SK-N-SH (cell line): ENCODE measurements at regions of chr5 and their contacts with region 1.

Region 1: GRCh38 chr5:134289509-134290113 is 63.7 kb upstream of the PPP2CA start:
- DNase-seq: peak; percentile 69
- H3K4me3 ChIP-seq: no peak overlapping the region; a peak in 1 of 4 replicates
- H3K27ac ChIP-seq: no peak overlapping the region
- H3K4me1 ChIP-seq: no peaks in the 10 kb centered on the region
- H3K27me3 ChIP-seq: no peaks in the 10 kb centered on the region
- CTCF ChIP-seq: peak; percentile 83
- EP300 ChIP-seq: no peak
- RAD21 ChIP-seq: peak; percentile 98

Region 2: DNA sequence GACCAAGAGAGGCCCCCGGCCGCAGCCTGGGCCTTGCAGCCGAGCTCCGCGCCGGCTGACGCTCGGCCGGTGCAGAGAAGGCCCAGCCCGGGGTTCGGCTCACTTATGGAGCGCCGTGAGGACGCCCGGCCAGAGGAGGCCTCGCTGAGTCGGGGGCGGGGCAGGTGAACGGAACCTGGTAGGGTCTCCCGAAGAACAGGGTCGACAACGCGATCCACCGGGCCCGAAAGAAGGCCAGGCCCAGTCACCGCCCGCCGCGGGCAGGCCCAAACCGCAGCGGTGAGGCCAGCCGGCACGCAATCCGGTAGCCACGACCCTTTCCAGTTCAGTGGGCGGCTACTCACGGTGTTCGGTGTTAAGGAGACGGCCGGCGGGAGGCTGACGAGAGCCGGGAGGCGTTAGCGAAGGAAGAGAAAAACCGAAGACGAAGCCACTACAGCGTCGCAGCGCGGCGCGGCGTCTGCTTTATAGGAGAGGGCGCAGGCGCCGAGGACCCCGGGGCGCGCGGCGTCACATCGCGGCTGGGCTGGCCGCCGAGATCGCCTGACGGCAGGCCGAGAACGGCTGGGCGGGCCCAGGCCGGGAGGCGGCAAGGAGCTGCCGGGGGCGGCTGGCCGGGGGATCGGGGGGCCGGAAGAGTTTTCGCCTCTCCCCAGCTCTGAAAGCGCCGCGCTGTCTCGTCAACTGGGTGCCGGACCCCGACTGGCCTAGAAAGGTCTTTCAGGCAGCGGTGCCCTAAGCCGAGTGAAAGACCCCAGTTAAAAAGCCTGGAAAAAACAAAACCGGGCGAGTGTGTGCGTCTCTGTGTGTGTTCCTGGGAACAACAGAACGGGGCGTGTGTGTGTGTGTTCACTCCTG is 112.9 kb before region 1 on chr5 and contains the start of gene SKP1:
- CTCF ChIA-PET with region 1: interaction called, 182 read pairs
- POLR2A ChIA-PET with region 1: interaction called, 3 read pairs
- DNase-seq: peak; percentile 94
- H3K4me3 ChIP-seq: peak within 1 kb of the TSS; percentile 77 to 84
- H3K27ac ChIP-seq: peak within 1 kb of the TSS; percentile 95 to 96
- H3K4me1 ChIP-seq: peaks cover 10 to 22% of the 10 kb centered on the region in 2 experiments; a peak in 2 of 4 replicates
- H3K27me3 ChIP-seq: no peaks in the 10 kb centered on the region
- CTCF ChIP-seq: no peak
- EP300 ChIP-seq: no peak
- RAD21 ChIP-seq: no peak
- polyA plus RNA-seq, gene SKP1: 407 and 428 TPM in 2 replicates

Region 3: GRCh38 chr5:134184155-134185135 is 105.2 kb before region 1 on chr5:
- CTCF ChIA-PET with region 1: interaction called, 182 read pairs
- POLR2A ChIA-PET with region 1: no interaction called
- DNase-seq: peak; percentile 81
- H3K4me3 ChIP-seq: no peak overlapping the region
- H3K27ac ChIP-seq: no peak overlapping the region
- H3K4me1 ChIP-seq: no peaks in the 10 kb centered on the region; a peak in 1 of 4 replicates
- H3K27me3 ChIP-seq: no peaks in the 10 kb centered on the region
- CTCF ChIP-seq: peak; percentile 84
- EP300 ChIP-seq: no peak
- RAD21 ChIP-seq: peak; percentile 86

Region 4: GRCh38 chr5:134195666-134196065 is 93.9 kb before region 1 on chr5:
- CTCF ChIA-PET with region 1: interaction called, 182 read pairs
- POLR2A ChIA-PET with region 1: no interaction called
- DNase-seq: no peak
- H3K4me3 ChIP-seq: no peak overlapping the region
- H3K27ac ChIP-seq: no peak overlapping the region
- H3K4me1 ChIP-seq: no peaks in the 10 kb centered on the region
- H3K27me3 ChIP-seq: no peaks in the 10 kb centered on the region
- CTCF ChIP-seq: no peak
- EP300 ChIP-seq: no peak
- RAD21 ChIP-seq: no peak

Region 5: DNA sequence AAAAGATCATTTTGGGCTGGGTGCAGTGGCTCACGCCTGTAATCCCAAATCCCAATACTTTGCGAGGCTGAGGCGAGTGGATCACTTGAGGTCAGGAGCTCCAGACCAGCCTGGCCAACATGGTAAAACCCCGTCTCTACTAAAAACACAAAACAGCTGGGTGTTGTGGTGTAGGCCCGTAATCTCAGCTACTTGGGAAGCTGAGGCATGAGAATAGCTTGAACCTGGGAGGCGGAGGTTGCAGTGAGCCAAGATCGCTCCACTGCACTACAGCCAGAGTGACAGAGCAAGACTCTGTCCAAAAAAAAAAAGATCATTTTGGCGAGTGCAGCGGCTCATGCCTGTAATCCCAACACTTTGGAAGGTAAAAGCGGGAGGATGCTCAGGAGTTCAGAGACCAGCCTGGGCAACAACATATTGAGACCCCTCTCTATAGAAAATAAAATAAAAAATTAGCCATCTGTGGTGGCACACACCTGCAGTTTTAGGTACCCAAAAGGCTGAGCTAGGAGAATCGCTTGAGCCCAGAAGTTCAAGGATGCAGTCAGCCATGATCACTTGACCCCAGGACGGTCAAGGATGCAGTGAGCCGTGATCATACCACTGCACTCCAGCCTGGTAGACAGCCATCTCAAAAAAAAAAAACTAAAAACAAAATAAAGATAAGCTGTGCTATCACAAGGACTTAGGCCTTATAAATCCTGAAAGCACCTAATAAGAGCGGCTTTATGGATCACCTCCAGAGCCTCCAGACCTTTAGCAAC is 80.0 kb before region 1 on chr5:
- CTCF ChIA-PET with region 1: interaction called, 10 read pairs
- POLR2A ChIA-PET with region 1: no interaction called
- DNase-seq: no peak
- H3K4me3 ChIP-seq: no peak overlapping the region
- H3K27ac ChIP-seq: 0 out of 4 replicates have a peak overlapping the region, but pooled peaks of 1 of the 2 experiments have one; percentile 9
- H3K4me1 ChIP-seq: peaks cover 3 to 6% of the 10 kb centered on the region in 2 experiments; a peak in 3 of 4 replicates
- H3K27me3 ChIP-seq: no peaks in the 10 kb centered on the region
- CTCF ChIP-seq: no peak
- EP300 ChIP-seq: no peak
- RAD21 ChIP-seq: no peak

Region 6: GRCh38 chr5:134225618-134226440 is 63.8 kb before region 1 on chr5 and contains the start of gene PPP2CA:
- CTCF ChIA-PET with region 1: interaction called, 24 read pairs
- POLR2A ChIA-PET with region 1: no interaction called
- DNase-seq: peak; percentile 95
- H3K4me3 ChIP-seq: peak within 1 kb of the TSS; percentile 86 to 98
- H3K27ac ChIP-seq: peak within 1 kb of the TSS; percentile 97 to 98
- H3K4me1 ChIP-seq: peaks cover 4 to 23% of the 10 kb centered on the region in 2 experiments; a peak in 3 of 4 replicates
- H3K27me3 ChIP-seq: no peaks in the 10 kb centered on the region
- CTCF ChIP-seq: no peak
- EP300 ChIP-seq: no peak; a peak in 1 of 4 replicates
- RAD21 ChIP-seq: no peak
- polyA plus RNA-seq, gene PPP2CA: 146 and 163 TPM in 2 replicates

Region 7: GRCh38 chr5:134304311-134304710 is 14.7 kb after region 1 on chr5:
- CTCF ChIA-PET with region 1: interaction called, 18 read pairs
- POLR2A ChIA-PET with region 1: no interaction called
- DNase-seq: no peak
- H3K4me3 ChIP-seq: no peak overlapping the region
- H3K27ac ChIP-seq: no peak overlapping the region
- H3K4me1 ChIP-seq: no peaks in the 10 kb centered on the region
- H3K27me3 ChIP-seq: no peaks in the 10 kb centered on the region
- CTCF ChIP-seq: no peak
- EP300 ChIP-seq: no peak
- RAD21 ChIP-seq: no peak